Naive thymus-derived CD4-positive, alpha-beta T cell (primary cell): ENCODE measurements at regions of chr3 and their contacts with region 1.

Region 1: GRCh38 chr3:39288300-39288808 is 8.5 kb upstream of the CX3CR1 start:
- DNase-seq: peak; percentile 49 to 77 (median 71)
- ATAC-seq: peak; percentile 97
- H3K4me3 ChIP-seq: no peak overlapping the region
- H3K4me3 Mint-ChIP-seq: peak overlapping the region in 1 of 10 donors; percentile 3
- H3K27ac ChIP-seq: no peak overlapping the region
- H3K27ac Mint-ChIP-seq: peak overlapping the region in 2 of 9 donors; percentile 7 to 66
- H3K4me1 ChIP-seq: peaks cover 0 to 4% of the 10 kb centered on the region in 2 donors
- H3K4me1 Mint-ChIP-seq: peaks cover 7 to 62% (median 17%) of the 10 kb centered on the region in 7 donors
- H3K27me3 ChIP-seq: no peaks in the 10 kb centered on the region
- H3K27me3 Mint-ChIP-seq: no peaks in the 10 kb centered on the region

Region 2: GRCh38 chr3:38235466-38235865 is 1052.9 kb before region 1 on chr3:
- CTCF ChIA-PET with region 1: no interaction called
- POLR2A ChIA-PET with region 1: no interaction called
- intact Hi-C with region 1: no loop called
- DNase-seq: no peak
- ATAC-seq: no peak
- H3K4me3 ChIP-seq: no peak overlapping the region
- H3K4me3 Mint-ChIP-seq: no peak overlapping the region
- H3K27ac ChIP-seq: no peak overlapping the region
- H3K27ac Mint-ChIP-seq: no peak overlapping the region
- H3K4me1 ChIP-seq: no peaks in the 10 kb centered on the region
- H3K4me1 Mint-ChIP-seq: peaks cover 0 to 9% (median 0%) of the 10 kb centered on the region in 7 donors
- H3K27me3 ChIP-seq: no peaks in the 10 kb centered on the region
- H3K27me3 Mint-ChIP-seq: no peaks in the 10 kb centered on the region

Region 3: DNA sequence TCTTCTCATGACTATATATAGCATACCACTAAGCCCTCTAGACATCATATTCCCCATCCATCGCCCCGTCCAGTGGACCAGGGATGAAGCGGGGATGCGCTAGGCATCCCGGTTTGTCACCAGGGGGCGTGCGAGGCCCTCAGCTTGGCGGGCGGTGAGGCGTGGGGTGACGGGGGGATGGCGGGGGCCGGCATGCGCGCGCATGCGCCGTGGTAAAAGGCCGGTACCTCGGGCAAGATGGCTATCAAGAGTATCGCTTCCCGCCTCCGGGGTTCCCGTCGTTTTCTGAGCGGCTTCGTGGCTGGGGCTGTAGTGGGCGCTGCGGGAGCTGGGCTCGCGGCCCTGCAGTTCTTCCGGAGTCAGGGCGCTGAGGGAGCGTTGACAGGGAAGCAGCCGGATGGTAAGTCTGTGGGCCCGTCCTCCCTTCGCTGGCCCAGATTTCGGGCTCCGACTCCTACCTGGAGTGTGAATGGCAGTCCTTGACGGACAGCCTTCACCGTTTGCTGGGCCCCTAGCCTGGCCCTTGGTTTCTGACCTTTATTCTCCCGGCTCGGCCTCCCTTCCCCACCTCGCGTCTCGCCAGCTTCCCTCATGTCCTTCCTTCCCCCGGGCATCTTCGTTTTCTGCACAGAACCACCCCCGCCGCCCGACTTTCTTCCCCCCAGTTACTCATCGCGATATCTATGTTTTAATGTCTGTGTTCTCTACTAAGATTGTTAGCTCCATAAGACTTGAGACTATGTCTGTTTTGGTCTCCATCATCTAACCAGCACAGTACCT is 792.0 kb before region 1 on chr3 and contains the start of gene EXOG:
- CTCF ChIA-PET with region 1: interaction called, 4 read pairs
- POLR2A ChIA-PET with region 1: no interaction called
- intact Hi-C with region 1: loop called in 1 of 2 experiments (anchors 5 kb)
- DNase-seq: peak; percentile 79 to 93 (median 89)
- ATAC-seq: peak; percentile 98
- H3K4me3 ChIP-seq: peak within 1 kb of the TSS; percentile 92
- H3K4me3 Mint-ChIP-seq: peak within 1 kb of the TSS; percentile 82 to 98 (median 95)
- H3K27ac ChIP-seq: peak within 1 kb of the TSS; percentile 75
- H3K27ac Mint-ChIP-seq: peak within 1 kb of the TSS; percentile 20 to 94 (median 86)
- H3K4me1 ChIP-seq: peaks cover 0 to 8% of the 10 kb centered on the region in 2 donors
- H3K4me1 Mint-ChIP-seq: peaks cover 4 to 29% (median 24%) of the 10 kb centered on the region in 7 donors
- H3K27me3 ChIP-seq: no peaks in the 10 kb centered on the region
- H3K27me3 Mint-ChIP-seq: no peaks in the 10 kb centered on the region
- total RNA-seq, gene EXOG: 20.4 to 31.0 (median 21.3) TPM

Region 4: GRCh38 chr3:39000008-39000450 is 288.3 kb before region 1 on chr3:
- CTCF ChIA-PET with region 1: no interaction called
- POLR2A ChIA-PET with region 1: no interaction called
- intact Hi-C with region 1: loop called in 1 of 2 experiments (anchors 1 kb)
- DNase-seq: peak in 6 of 9 donors; percentile 14 to 39 (median 32)
- ATAC-seq: peak; percentile 50
- H3K4me3 ChIP-seq: no peak overlapping the region
- H3K4me3 Mint-ChIP-seq: no peak overlapping the region
- H3K27ac ChIP-seq: no peak overlapping the region
- H3K27ac Mint-ChIP-seq: no peak overlapping the region
- H3K4me1 ChIP-seq: no peaks in the 10 kb centered on the region
- H3K4me1 Mint-ChIP-seq: peaks cover 0 to 2% (median 0%) of the 10 kb centered on the region in 7 donors
- H3K27me3 ChIP-seq: no peaks in the 10 kb centered on the region
- H3K27me3 Mint-ChIP-seq: peaks cover 5 to 16% (median 13%) of the 10 kb centered on the region in 5 donors

Region 5: DNA sequence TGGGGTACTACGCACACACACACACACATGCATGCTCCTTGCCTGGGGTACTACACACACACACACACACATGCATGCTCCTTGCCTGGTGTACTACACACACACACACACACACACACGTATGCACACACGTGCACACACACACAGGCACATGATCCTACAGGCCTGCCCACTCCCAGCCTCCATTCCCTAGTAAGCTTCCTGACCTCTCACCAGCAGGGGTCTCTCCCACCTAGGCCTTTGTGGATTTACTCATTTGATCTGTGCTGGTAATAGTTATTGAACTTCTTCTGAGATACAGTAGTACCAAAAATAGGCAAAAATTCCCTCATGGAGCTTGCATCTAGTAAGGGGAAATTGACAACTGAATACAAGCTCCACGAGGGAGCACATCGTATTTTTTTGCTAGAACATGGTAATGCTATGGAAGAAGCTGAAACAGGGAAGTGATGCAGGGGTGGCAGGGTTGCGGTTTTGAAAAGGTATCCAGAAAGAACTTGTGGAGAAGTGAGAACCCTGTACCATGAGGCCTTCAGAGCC is 161.8 kb before region 1 on chr3:
- CTCF ChIA-PET with region 1: interaction called, 191 read pairs
- POLR2A ChIA-PET with region 1: interaction called, 12 read pairs
- intact Hi-C with region 1: loop called (anchors 1 kb)
- DNase-seq: peak in 4 of 9 donors; percentile 39 to 59 (median 50)
- ATAC-seq: peak; percentile 60
- H3K4me3 ChIP-seq: no peak overlapping the region
- H3K4me3 Mint-ChIP-seq: no peak overlapping the region
- H3K27ac ChIP-seq: no peak overlapping the region
- H3K27ac Mint-ChIP-seq: peak overlapping the region in 6 of 9 donors; percentile 22 to 87 (median 54)
- H3K4me1 ChIP-seq: peaks cover 12 to 14% of the 10 kb centered on the region in 2 donors
- H3K4me1 Mint-ChIP-seq: peaks cover 15 to 34% (median 24%) of the 10 kb centered on the region in 7 donors
- H3K27me3 ChIP-seq: no peaks in the 10 kb centered on the region
- H3K27me3 Mint-ChIP-seq: peaks cover 0 to 10% (median 0%) of the 10 kb centered on the region in 5 donors

Region 6: GRCh38 chr3:39260957-39261356 is 27.4 kb before region 1 on chr3:
- CTCF ChIA-PET with region 1: interaction called, 3 read pairs
- POLR2A ChIA-PET with region 1: no interaction called
- intact Hi-C with region 1: loop called (anchors 1 to 2 kb)
- DNase-seq: peak in 8 of 9 donors; percentile 17 to 78 (median 48)
- ATAC-seq: peak; percentile 96
- H3K4me3 ChIP-seq: no peak overlapping the region
- H3K4me3 Mint-ChIP-seq: peak overlapping the region in 2 of 10 donors; percentile 55 to 76
- H3K27ac ChIP-seq: no peak overlapping the region
- H3K27ac Mint-ChIP-seq: peak overlapping the region in 6 of 9 donors; percentile 14 to 87 (median 36)
- H3K4me1 ChIP-seq: peaks cover 0 to 73% of the 10 kb centered on the region in 2 donors
- H3K4me1 Mint-ChIP-seq: peaks cover 6 to 58% (median 8%) of the 10 kb centered on the region in 7 donors
- H3K27me3 ChIP-seq: no peaks in the 10 kb centered on the region
- H3K27me3 Mint-ChIP-seq: peaks cover 0 to 28% (median 9%) of the 10 kb centered on the region in 5 donors

Region 7: DNA sequence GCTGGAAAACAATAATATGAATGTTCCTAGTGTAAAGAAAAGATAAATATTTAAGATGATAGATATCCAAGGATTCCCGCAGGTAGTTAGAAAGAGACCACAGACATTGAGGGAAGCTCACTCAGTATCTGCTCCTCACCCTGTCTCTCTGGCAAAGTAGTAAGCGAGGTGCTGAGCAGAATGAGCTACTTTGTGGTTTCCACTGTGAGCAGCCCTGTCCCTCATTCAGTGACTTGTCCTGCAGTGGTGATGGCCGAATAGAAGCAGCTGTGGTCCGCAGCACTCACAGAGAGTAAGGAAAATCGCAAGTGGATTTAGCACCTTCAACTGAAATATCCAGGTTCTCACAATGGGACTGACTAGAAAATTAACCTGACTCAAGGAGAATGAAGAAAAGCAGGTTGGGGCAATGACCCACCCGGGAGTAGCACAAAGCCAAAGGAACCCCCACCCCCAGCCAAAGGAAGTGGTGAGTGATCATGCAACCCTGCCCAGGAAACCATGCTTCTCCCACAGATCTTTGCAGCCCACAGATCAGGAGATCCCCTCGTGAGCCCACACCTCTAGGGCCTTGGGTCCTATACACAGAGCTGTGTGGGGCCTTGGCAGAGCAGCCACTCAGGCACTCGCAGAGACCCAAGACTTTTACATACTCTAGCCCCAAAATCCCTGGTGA is 73.0 kb after region 1 on chr3:
- CTCF ChIA-PET with region 1: interaction called, 3 read pairs
- POLR2A ChIA-PET with region 1: no interaction called
- intact Hi-C with region 1: loop called in 1 of 2 experiments (anchors 5 kb)
- DNase-seq: peak in 4 of 9 donors; percentile 25 to 70 (median 34)
- ATAC-seq: peak; percentile 93
- H3K4me3 ChIP-seq: no peak overlapping the region
- H3K4me3 Mint-ChIP-seq: peak overlapping the region; percentile 25 to 82 (median 68)
- H3K27ac ChIP-seq: no peak overlapping the region
- H3K27ac Mint-ChIP-seq: peak overlapping the region; percentile 13 to 89 (median 43)
- H3K4me1 ChIP-seq: peaks cover 18 to 28% of the 10 kb centered on the region in 2 donors
- H3K4me1 Mint-ChIP-seq: peaks cover 24 to 61% (median 49%) of the 10 kb centered on the region in 7 donors
- H3K27me3 ChIP-seq: no peaks in the 10 kb centered on the region
- H3K27me3 Mint-ChIP-seq: peaks cover 0 to 10% (median 0%) of the 10 kb centered on the region in 5 donors

Region 8: GRCh38 chr3:39631136-39631535 is 342.8 kb after region 1 on chr3:
- CTCF ChIA-PET with region 1: no interaction called
- POLR2A ChIA-PET with region 1: no interaction called
- intact Hi-C with region 1: no loop called
- DNase-seq: no peak
- ATAC-seq: no peak
- H3K4me3 ChIP-seq: no peak overlapping the region
- H3K4me3 Mint-ChIP-seq: no peak overlapping the region
- H3K27ac ChIP-seq: no peak overlapping the region
- H3K27ac Mint-ChIP-seq: no peak overlapping the region
- H3K4me1 ChIP-seq: no peaks in the 10 kb centered on the region
- H3K4me1 Mint-ChIP-seq: no peaks in the 10 kb centered on the region
- H3K27me3 ChIP-seq: no peaks in the 10 kb centered on the region
- H3K27me3 Mint-ChIP-seq: peaks cover 4 to 19% (median 8%) of the 10 kb centered on the region in 5 donors